HEK293 (cell line): ENCODE measurements at regions of chr1 and their contacts with region 1.

Region 1: GRCh38 chr1:97243973-97244560 is 522.5 kb downstream of the PTBP2 start:
- H3K4me3 ChIP-seq: no peak overlapping the region
- H3K27ac ChIP-seq: no peak overlapping the region
- H3K4me1 ChIP-seq: no peaks in the 10 kb centered on the region
- CTCF ChIP-seq: no peak

Region 2: DNA sequence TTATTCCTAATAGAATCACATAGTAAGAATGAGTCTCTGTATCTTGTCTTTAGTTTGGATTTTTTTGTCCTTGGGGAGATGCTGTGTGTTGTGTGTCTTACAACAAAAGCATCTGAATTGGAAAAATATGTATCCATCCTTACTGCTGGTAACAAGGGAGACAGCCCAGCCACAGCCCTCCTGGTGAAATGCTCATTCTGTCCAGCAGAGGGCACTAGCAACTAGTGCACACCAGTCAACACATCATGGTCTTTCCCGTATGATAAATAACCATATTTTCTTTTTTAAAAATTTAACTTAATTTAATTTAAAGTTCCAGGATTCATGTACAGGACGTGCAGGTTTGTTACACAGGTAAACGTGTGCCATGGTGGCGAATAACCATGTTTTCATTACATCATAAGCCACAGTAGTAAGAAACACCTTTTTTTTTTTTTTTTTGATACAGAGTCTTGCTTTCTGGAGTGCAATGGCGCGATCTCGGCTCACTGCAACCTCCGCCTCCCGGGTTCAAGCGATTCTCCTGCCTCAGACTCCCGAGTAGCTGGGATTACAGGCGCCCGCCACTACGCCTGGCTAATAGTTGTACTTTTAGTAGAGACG is 277.4 kb before region 1 on chr1:
- CTCF ChIA-PET with region 1: no interaction called
- POLR2A ChIA-PET with region 1: no interaction called
- H3K4me3 ChIP-seq: peak overlapping the region; percentile 27
- H3K27ac ChIP-seq: no peak overlapping the region
- H3K4me1 ChIP-seq: no peaks in the 10 kb centered on the region
- CTCF ChIP-seq: no peak; the same call in 1 of the 2 replicates

Region 3: GRCh38 chr1:97524211-97524610 is 280.1 kb after region 1 on chr1:
- CTCF ChIA-PET with region 1: interaction called, 12 read pairs
- POLR2A ChIA-PET with region 1: no interaction called
- H3K4me3 ChIP-seq: no peak overlapping the region
- H3K27ac ChIP-seq: no peak overlapping the region
- H3K4me1 ChIP-seq: no peaks in the 10 kb centered on the region
- CTCF ChIP-seq: no peak